Ovary (tissue), 10 donors: ENCODE measurements at regions of chrX and their contacts with region 1.

Region 1: GRCh38 chrX:23901805-23902204 is 5.9 kb downstream of the APOO start:
- DNase-seq: peak in 3 of 5 donors; percentile 33 to 59 (median 34)
- H3K4me3 ChIP-seq: no peak overlapping the region
- H3K27ac ChIP-seq: no peak overlapping the region
- H3K4me1 ChIP-seq: peaks cover 3% of the 10 kb centered on the region
- H3K27me3 ChIP-seq: no peaks in the 10 kb centered on the region
- CTCF ChIP-seq: peak in 1 of 3 donors; percentile 34
- EP300 ChIP-seq: no peak
- POLR2A ChIP-seq: no peak

Region 2: DNA sequence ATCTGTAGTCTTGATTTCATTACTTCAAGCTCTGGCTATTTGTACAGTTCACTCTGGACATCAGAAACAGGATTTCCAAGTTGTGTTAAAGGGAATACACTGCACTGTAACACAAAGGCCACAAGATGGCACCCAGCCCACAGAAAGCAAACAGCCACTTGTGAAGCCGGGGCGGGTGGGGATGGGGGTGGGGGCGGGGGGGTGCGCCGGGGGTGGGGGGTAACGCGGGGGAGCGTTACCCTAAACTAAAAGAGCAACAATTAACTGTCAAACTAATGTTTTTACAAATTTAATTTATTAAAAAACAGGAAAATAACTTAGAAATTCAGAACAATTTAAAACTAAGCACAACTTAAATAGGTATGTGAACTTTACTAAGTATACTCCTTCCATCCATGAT is 207.2 kb before region 1 on chrX:
- intact Hi-C with region 1: loop called in 3 of 4 experiments (anchors 5 to 10 kb)
- DNase-seq: peak; percentile 50 to 68 (median 60)
- H3K4me3 ChIP-seq: no peak overlapping the region
- H3K27ac ChIP-seq: no peak overlapping the region
- H3K4me1 ChIP-seq: no peaks in the 10 kb centered on the region
- H3K27me3 ChIP-seq: no peaks in the 10 kb centered on the region
- CTCF ChIP-seq: no peak
- EP300 ChIP-seq: no peak
- POLR2A ChIP-seq: no peak

Region 3: GRCh38 chrX:23782863-23783568 is 118.8 kb before region 1 on chrX and contains the start of gene SAT1:
- intact Hi-C with region 1: loop called (anchors 1 to 10 kb)
- DNase-seq: peak; percentile 93 to 96 (median 95)
- H3K4me3 ChIP-seq: peak within 1 kb of the TSS; percentile 54
- H3K27ac ChIP-seq: peak within 1 kb of the TSS; percentile 78 to 83
- H3K4me1 ChIP-seq: peaks cover 2% of the 10 kb centered on the region
- H3K27me3 ChIP-seq: no peaks in the 10 kb centered on the region
- CTCF ChIP-seq: peak; percentile 72 to 82 (median 76)
- EP300 ChIP-seq: no peak
- POLR2A ChIP-seq: peak; percentile 94
- total RNA-seq, gene SAT1: 58.7 to 3,021 (median 142) TPM

Region 4: DNA sequence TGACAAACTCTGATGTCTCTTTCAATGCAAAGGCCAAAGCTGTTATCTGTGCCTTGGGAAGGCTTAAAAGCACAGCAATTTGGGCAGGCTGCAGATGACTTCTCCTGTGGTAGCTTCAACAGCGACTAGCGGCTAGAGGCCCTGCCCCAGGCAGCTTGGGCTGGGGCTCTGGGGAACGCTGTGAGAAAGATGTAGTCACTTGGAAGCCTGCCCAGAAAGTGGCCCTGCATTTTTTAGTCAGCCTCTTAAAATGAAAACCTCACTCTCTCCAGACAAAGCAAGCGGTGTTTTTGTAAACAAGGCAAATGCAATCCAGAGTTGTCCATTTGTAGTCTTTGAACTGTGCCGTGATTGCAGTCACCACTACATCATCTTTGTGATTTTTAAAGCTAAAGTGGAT is 717.8 kb after region 1 on chrX:
- intact Hi-C with region 1: no loop called
- DNase-seq: peak; percentile 24 to 50 (median 26)
- H3K4me3 ChIP-seq: no peak overlapping the region
- H3K27ac ChIP-seq: no peak overlapping the region
- H3K4me1 ChIP-seq: no peaks in the 10 kb centered on the region
- H3K27me3 ChIP-seq: no peaks in the 10 kb centered on the region
- CTCF ChIP-seq: no peak
- EP300 ChIP-seq: no peak
- POLR2A ChIP-seq: no peak